ENCODE measurements at regions of chr7 and their contacts with region 1.

Region 1: DNA sequence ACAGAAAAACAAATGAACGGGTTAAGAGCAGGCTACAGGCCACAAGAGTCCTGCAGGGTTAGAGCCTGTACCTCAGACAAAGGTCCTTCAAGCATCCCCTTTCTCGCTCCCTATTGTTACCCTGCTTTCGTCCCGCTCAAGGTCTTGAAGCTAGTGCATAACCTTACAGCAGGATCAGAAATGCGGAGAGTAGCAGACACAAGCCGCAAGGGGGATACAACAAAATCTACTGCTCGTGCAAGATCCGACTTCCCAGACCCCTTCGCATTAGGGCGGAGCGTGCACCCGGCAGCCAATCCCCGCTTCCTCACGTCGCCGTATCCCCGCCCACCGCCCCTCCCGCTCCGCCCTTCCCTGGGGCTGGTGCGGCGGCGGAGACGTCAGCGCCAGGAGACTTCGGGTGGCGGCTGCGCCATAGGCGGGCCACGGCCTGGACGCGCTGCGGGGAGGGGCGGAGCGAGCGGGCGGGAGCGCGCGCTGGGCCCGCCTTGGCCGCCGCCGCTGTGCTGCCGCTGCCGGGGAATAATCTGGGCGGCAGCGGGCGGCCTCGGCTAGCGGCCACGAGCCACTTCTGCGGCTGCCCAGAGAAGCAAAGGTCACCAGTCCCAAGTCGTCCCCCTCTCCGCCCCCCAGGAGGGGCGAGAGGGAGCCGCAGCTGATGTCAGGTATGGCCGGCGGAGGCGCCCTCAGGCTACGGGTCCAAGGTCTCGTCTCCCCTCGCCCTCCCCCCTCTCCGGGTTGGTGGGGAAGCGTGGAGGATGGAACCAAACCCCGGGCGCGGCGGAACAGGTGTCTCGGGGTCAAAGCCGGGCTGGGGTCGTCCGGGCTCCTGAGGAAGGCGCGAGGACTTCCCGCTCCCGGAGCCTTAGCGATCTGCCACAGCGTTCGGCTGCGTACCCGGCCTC is at the start of gene C1GALT1:
- DNase-seq: peak; percentile 99
- H3K4me3 ChIP-seq: peak within 1 kb of the TSS; percentile 77 to 95 (median 91)
- H3K27ac ChIP-seq: peak within 1 kb of the TSS; percentile 78
- H3K4me1 ChIP-seq: peaks cover 22% of the 10 kb centered on the region
- H3K27me3 ChIP-seq: no peaks in the 10 kb centered on the region
- CTCF ChIP-seq: peak; percentile 24 to 56
- POLR2A ChIP-seq: peak; percentile 94
- total RNA-seq, gene C1GALT1: 21.9 and 31.1 TPM in 2 replicates

Region 2: DNA sequence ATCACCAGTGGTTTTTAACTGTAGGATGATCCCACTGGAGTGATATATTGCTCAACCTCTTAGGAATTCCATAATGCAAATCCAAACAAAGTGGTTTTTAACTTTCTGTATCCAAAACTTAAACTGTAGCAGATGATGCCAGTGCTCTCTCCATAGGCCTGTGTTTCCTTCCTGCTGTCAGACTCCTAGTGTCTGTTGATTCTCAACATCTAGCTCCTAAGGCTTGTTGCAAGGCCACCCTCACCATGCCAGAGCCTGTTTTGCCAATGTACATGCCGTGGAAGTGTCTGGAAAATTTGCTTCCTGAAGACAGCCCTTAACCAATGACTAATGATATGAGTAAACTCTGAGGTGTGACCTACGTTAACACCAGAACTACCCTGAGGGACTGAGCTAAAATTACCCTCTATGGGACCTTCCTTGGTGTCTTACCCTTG is 39.2 kb after region 1 on chr7:
- CTCF ChIA-PET with region 1: interaction called, 3 read pairs
- POLR2A ChIA-PET with region 1: no interaction called
- dilution Hi-C with region 1: no loop called
- intact Hi-C with region 1: loop called (anchors 2 kb)
- DNase-seq: peak; percentile 55
- H3K4me3 ChIP-seq: no peak overlapping the region
- H3K27ac ChIP-seq: peak overlapping the region; percentile 21
- H3K4me1 ChIP-seq: peaks cover 7% of the 10 kb centered on the region
- H3K27me3 ChIP-seq: no peaks in the 10 kb centered on the region
- CTCF ChIP-seq: no peak
- POLR2A ChIP-seq: no peak

Region 3: DNA sequence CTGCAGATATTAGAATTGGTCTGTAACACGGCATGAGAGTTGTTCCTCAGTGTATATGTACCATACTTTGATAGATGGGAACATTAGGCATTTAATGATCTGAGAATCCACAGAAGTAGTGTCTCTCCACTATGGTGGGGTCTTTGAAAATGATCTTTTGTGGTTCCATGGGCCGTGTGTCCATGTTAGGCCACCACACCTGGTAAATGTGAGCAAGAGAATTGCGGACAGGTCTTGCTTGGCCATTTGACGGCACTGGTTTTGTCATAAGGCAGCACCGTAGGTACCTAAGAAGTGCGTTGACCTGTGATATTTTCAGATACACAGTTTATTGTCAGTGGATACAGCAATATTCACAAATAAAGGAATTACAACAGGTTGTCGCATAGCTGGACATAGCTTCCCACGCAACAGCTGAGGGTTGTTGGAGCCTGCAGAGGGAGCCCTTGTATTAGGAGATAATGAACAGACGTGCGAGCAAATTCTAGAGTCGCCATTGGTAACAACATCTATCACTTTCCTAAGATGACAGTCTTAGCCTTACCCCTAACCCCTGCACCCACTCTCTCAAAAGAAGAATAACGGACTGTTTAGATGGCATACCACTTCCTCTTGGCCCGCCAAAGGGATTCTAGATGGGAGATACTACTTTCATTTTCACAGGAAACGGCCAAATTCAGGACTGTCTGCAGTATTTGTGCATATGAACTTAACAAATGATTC is 241.9 kb after region 1 on chr7:
- CTCF ChIA-PET with region 1: interaction called, 3 read pairs
- POLR2A ChIA-PET with region 1: no interaction called
- dilution Hi-C with region 1: no loop called
- intact Hi-C with region 1: loop called (anchors 5 kb)
- DNase-seq: peak; percentile 67
- H3K4me3 ChIP-seq: peak overlapping the region; percentile 37 to 93 (median 81)
- H3K27ac ChIP-seq: peak overlapping the region; percentile 3
- H3K4me1 ChIP-seq: peaks cover 2% of the 10 kb centered on the region
- H3K27me3 ChIP-seq: peaks cover 0 to 2% of the 10 kb centered on the region in 2 experiments
- CTCF ChIP-seq: peak; percentile 73 to 82
- POLR2A ChIP-seq: no peak

Region 4: DNA sequence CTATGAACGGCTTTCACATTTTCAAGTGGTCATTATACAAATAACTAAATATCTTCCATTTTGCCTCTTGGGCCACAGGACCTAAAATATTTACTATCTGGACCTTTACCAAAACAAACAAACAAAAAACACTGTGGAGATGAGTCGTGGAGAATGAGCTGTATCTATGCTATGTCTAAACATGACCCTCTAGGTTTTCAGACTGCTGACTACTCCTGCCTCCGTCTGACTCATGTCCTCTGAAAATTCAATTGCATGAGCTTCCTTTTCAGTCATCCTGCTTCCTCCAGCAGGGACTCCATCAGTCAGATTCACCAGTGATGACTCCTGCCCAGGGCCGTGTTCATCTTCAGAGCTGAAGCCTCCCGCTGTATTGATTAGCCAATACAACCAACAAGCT is 256.4 kb after region 1 on chr7:
- CTCF ChIA-PET with region 1: no interaction called
- POLR2A ChIA-PET with region 1: no interaction called
- dilution Hi-C with region 1: no loop called
- intact Hi-C with region 1: loop called (anchors 5 kb)
- DNase-seq: peak; percentile 78
- H3K4me3 ChIP-seq: no peak overlapping the region
- H3K27ac ChIP-seq: peak overlapping the region; percentile 35
- H3K4me1 ChIP-seq: peaks cover 20% of the 10 kb centered on the region
- H3K27me3 ChIP-seq: no peaks in the 10 kb centered on the region
- CTCF ChIP-seq: no peak
- POLR2A ChIP-seq: no peak

Region 5: DNA sequence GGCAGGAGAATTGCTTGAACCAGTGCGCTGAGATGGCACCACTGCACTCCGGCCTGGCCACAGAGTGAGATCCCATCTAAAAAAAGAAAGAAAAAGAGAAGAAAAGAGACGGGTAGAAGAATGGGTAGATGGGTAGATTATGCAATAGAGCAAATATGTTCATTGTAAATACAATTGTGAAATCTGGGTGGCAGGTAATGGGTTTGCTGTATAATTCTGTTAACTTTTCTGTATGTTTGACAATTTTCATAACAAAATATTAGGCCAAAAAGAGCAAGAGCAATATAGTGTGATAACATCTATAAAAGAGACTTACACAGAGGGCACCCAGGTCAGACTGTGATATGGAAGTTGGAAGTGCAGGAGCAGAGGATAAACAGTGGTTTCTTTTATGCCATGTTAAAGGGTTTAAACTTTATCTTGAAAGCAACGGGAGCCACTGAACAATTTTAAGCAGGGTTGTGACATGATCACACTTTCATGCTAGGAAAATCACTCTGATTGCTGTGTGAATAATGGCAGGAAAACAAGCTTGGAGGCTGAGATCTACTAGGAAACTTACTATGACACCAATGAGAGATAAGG is 359.9 kb after region 1 on chr7:
- CTCF ChIA-PET with region 1: no interaction called
- POLR2A ChIA-PET with region 1: no interaction called
- dilution Hi-C with region 1: no loop called
- intact Hi-C with region 1: loop called (anchors 5 kb)
- DNase-seq: no peak
- H3K4me3 ChIP-seq: no peak overlapping the region
- H3K27ac ChIP-seq: no peak overlapping the region
- H3K4me1 ChIP-seq: no peaks in the 10 kb centered on the region
- H3K27me3 ChIP-seq: no peaks in the 10 kb centered on the region
- CTCF ChIP-seq: no peak
- POLR2A ChIP-seq: no peak

Region 6: DNA sequence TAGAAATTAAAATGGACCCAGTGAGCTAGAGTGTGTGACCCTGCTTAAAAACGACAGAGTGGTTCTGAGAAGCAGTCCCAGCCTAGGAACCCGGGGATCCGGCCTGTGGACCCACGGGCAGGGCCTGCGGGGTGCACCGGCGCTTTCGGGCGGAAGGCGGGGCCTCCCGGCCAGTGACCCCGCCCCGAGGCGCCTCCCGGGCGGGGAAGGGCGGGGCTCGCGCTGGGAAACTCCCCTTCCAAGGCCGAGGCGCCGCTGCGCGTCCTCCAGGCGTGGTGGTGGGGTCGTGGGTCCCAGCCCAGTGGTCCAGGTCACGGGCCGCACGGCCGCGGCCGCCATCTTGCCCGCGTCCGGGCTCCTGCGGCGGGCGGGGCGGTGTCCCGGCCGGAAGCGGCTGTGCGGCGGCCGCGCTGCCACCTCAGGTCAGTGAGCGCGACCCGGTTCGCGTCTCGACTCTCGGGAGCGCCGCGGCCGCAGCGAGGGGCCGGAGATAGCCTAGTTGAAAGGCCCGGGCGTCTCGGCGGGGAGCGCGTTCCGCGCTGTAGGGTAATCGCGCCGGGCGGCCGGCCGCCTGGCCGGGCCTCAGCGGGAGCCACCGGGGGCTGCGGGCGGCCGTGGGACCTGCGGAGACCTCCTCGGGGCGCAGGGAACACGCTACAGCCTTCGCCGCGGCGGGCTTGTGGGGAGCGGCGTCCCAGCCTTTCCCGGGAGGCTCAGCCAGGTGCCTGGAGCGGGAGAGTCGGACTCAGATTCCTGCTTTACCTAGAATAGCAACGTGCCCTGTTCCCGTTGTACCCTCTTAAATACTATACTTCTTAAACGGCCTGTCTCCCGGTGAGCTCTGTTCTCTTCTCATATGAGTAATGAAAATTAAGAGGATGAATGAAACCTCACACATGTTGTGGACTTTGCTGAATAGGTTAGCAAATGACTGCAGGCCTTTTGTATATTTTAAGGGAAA is 384.5 kb after region 1 on chr7 and contains the start of gene MIOS:
- CTCF ChIA-PET with region 1: no interaction called
- POLR2A ChIA-PET with region 1: no interaction called
- dilution Hi-C with region 1: no loop called
- intact Hi-C with region 1: loop called (anchors 1 kb)
- DNase-seq: peak; percentile 75
- H3K4me3 ChIP-seq: peak within 1 kb of the TSS; percentile 86 to 95 (median 91)
- H3K27ac ChIP-seq: peak within 1 kb of the TSS; percentile 85
- H3K4me1 ChIP-seq: peaks cover 10% of the 10 kb centered on the region
- H3K27me3 ChIP-seq: no peaks in the 10 kb centered on the region
- CTCF ChIP-seq: no peak
- POLR2A ChIP-seq: peak; percentile 72
- total RNA-seq, gene MIOS: 16.0 and 16.8 TPM in 2 replicates

Region 7: GRCh38 chr7:8261711-8262695 is 1079.6 kb after region 1 on chr7 and contains the start of gene ICA1:
- CTCF ChIA-PET with region 1: no interaction called
- POLR2A ChIA-PET with region 1: no interaction called
- dilution Hi-C with region 1: no loop called
- intact Hi-C with region 1: loop called (anchors 2 kb)
- DNase-seq: peak; percentile 72
- H3K4me3 ChIP-seq: peak within 1 kb of the TSS; percentile 84 to 96 (median 96)
- H3K27ac ChIP-seq: peak within 1 kb of the TSS; percentile 94
- H3K4me1 ChIP-seq: peaks cover 7% of the 10 kb centered on the region
- H3K27me3 ChIP-seq: no peaks in the 10 kb centered on the region
- CTCF ChIP-seq: peak in 1 of 2 donors; percentile 4
- POLR2A ChIP-seq: peak; percentile 65
- total RNA-seq, gene ICA1: 39.7 and 47.1 TPM in 2 replicates

Measured in endothelial cell of umbilical vein (primary cell).